K562 (cell line): ENCODE measurements at regions of chr12 and their contacts with region 1.

Region 1: GRCh38 chr12:65556681-65557437 is 267.4 kb upstream of the HMGA2 start:
- DNase-seq: peak; percentile 69 to 83 (median 76)
- ATAC-seq: peak; percentile 100
- H3K4me3 ChIP-seq: no peak overlapping the region
- H3K27ac ChIP-seq: no peak overlapping the region
- H3K4me1 ChIP-seq: peaks cover 0 to 7% of the 10 kb centered on the region in 2 experiments; a peak in 2 of 5 replicates
- H3K27me3 ChIP-seq: no peaks in the 10 kb centered on the region
- CTCF ChIP-seq: peak; percentile 85 to 89 (median 88)
- EP300 ChIP-seq: no peak
- POLR2A ChIP-seq: no peak
- RAD21 ChIP-seq: peak; percentile 81 to 94

Region 2: GRCh38 chr12:65449400-65449799 is 107.5 kb before region 1 on chr12:
- CTCF ChIA-PET with region 1: no interaction called
- POLR2A ChIA-PET with region 1: no interaction called
- in situ Hi-C with region 1: no loop called
- intact Hi-C with region 1: no loop called
- DNase-seq: no peak
- ATAC-seq: no peak
- H3K4me3 ChIP-seq: no peak overlapping the region
- H3K27ac ChIP-seq: no peak overlapping the region
- H3K4me1 ChIP-seq: no peaks in the 10 kb centered on the region
- H3K27me3 ChIP-seq: no peaks in the 10 kb centered on the region
- CTCF ChIP-seq: no peak
- EP300 ChIP-seq: no peak
- POLR2A ChIP-seq: no peak
- RAD21 ChIP-seq: no peak

Region 3: GRCh38 chr12:65602610-65603295 is 45.9 kb after region 1 on chr12:
- CTCF ChIA-PET with region 1: no interaction called
- POLR2A ChIA-PET with region 1: no interaction called
- in situ Hi-C with region 1: no loop called
- intact Hi-C with region 1: loop called (anchors 5 kb)
- DNase-seq: peak; percentile 67 to 84 (median 77)
- ATAC-seq: peak; percentile 99
- H3K4me3 ChIP-seq: peak overlapping the region; percentile 30
- H3K27ac ChIP-seq: peak overlapping the region; percentile 50; the same call in 2 of the 3 replicates
- H3K4me1 ChIP-seq: peaks cover 0 to 9% of the 10 kb centered on the region in 2 experiments; a peak in 2 of 5 replicates
- H3K27me3 ChIP-seq: no peaks in the 10 kb centered on the region
- CTCF ChIP-seq: peak; percentile 75 to 87 (median 78)
- EP300 ChIP-seq: no peak; the same call in 1 of the 2 replicates
- POLR2A ChIP-seq: no peak
- RAD21 ChIP-seq: peak; percentile 67 to 75

Region 4: GRCh38 chr12:65673732-65674131 is 116.9 kb after region 1 on chr12:
- CTCF ChIA-PET with region 1: no interaction called
- POLR2A ChIA-PET with region 1: no interaction called
- in situ Hi-C with region 1: no loop called
- intact Hi-C with region 1: loop called (anchors 5 kb)
- DNase-seq: no peak
- ATAC-seq: no peak
- H3K4me3 ChIP-seq: no peak overlapping the region
- H3K27ac ChIP-seq: no peak overlapping the region
- H3K4me1 ChIP-seq: peaks cover 0 to 21% of the 10 kb centered on the region in 2 experiments; a peak in 3 of 5 replicates
- H3K27me3 ChIP-seq: no peaks in the 10 kb centered on the region
- CTCF ChIP-seq: peak in 1 of 3 experiments; percentile 39; a peak in 2 of 6 replicates
- EP300 ChIP-seq: no peak
- POLR2A ChIP-seq: no peak
- RAD21 ChIP-seq: peak; percentile 58 to 74

Region 5: GRCh38 chr12:65685514-65685913 is 128.7 kb after region 1 on chr12:
- CTCF ChIA-PET with region 1: no interaction called
- POLR2A ChIA-PET with region 1: no interaction called
- in situ Hi-C with region 1: no loop called
- intact Hi-C with region 1: loop called (anchors 2 kb)
- DNase-seq: peak; percentile 20 to 34 (median 25)
- ATAC-seq: peak; percentile 79
- H3K4me3 ChIP-seq: no peak overlapping the region
- H3K27ac ChIP-seq: no peak overlapping the region
- H3K4me1 ChIP-seq: peaks cover 0 to 10% of the 10 kb centered on the region in 2 experiments; a peak in 2 of 5 replicates
- H3K27me3 ChIP-seq: no peaks in the 10 kb centered on the region
- CTCF ChIP-seq: peak; percentile 50 to 70 (median 60)
- EP300 ChIP-seq: no peak
- POLR2A ChIP-seq: no peak
- RAD21 ChIP-seq: peak; percentile 55 to 81

Region 6: GRCh38 chr12:66087365-66087943 is 530.6 kb after region 1 on chr12:
- CTCF ChIA-PET with region 1: interaction called, 6 read pairs
- POLR2A ChIA-PET with region 1: no interaction called
- in situ Hi-C with region 1: no loop called
- intact Hi-C with region 1: loop called (anchors 5 kb)
- DNase-seq: peak; percentile 23 to 61 (median 32)
- ATAC-seq: peak; percentile 85
- H3K4me3 ChIP-seq: no peak overlapping the region
- H3K27ac ChIP-seq: no peak overlapping the region
- H3K4me1 ChIP-seq: no peaks in the 10 kb centered on the region
- H3K27me3 ChIP-seq: peaks cover 2 to 8% of the 10 kb centered on the region in 2 experiments; a peak in 1 of 5 replicates
- CTCF ChIP-seq: peak; percentile 64 to 76 (median 73)
- EP300 ChIP-seq: no peak
- POLR2A ChIP-seq: no peak
- RAD21 ChIP-seq: peak; percentile 72 to 74